A549 (cell line): ENCODE measurements at regions of chr3 and their contacts with region 1.

Region 1: DNA sequence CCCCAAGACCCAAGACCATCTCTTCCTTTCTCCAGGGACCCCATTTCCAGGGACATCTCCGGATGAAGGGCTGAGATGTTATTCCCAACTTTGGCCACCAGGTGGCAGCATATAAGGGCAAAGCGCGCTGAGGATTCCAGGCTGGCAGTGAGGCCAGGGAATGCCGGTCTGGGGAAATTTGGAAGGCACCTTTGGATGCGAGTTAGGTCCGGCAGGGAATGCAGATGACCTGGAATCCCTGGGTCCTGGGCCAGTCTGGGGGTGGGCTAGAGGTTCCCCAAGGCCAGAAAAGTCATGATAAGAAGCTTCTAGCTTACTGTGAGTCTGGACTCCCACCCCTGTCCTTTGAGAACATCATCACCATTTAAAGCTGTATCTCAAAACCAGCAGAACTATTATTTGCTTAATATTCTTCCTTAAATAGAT is 1.6 kb upstream of the CHST13 start:
- DNase-seq: peak; percentile 41 to 64
- ATAC-seq: peak; percentile 32 to 65; a peak in 4 of 6 replicates
- H3K4me3 ChIP-seq: no peak overlapping the region
- H3K27ac ChIP-seq: no peak overlapping the region
- H3K4me1 ChIP-seq: 0 out of 3 replicates have a peak, but pooled peaks cover 7% of the 10 kb centered on the region
- CTCF ChIP-seq: peak; percentile 70
- EP300 ChIP-seq: no peak
- POLR2A ChIP-seq: no peak
- RAD21 ChIP-seq: peak; percentile 61 to 66

Region 2: DNA sequence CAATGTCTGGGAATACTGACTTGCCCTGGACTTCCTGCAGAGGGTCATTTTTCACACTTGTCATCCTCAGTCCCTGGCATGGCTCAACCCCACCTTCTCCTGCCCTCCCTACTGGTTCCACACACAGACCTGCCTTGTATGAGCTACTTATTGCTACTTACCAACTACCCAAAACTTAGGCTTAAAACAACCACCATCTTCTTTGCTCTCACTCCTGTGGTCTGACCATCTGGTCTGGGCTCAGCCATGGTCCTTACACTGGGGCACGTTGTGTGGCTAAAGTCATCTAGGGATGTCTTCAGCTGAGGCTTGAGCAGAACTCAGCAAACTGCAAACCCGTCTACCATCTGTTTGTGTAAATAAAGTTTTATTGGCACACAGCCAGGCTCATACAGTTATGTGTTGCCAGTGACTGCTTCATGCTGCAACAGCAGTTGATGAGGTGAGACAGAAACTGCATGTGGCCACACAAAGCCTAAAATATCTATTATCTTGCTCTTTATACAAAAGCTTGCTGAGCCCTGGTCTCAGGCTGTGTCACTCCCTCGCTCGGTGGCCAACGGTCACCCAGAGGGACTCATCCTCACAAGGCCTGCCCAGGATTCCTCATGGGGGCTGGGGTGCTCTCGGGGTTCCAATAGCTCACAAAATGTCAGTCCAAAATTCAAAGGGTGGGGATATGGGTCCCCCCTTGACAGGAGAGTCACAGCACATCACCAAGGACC is 208.6 kb before region 1 on chr3:
- CTCF ChIA-PET with region 1: no interaction called
- POLR2A ChIA-PET with region 1: no interaction called
- DNase-seq: no peak
- ATAC-seq: no peak
- H3K4me3 ChIP-seq: no peak overlapping the region
- H3K27ac ChIP-seq: no peak overlapping the region
- H3K4me1 ChIP-seq: no peaks in the 10 kb centered on the region
- CTCF ChIP-seq: no peak
- EP300 ChIP-seq: no peak
- POLR2A ChIP-seq: no peak
- RAD21 ChIP-seq: no peak

Region 3: DNA sequence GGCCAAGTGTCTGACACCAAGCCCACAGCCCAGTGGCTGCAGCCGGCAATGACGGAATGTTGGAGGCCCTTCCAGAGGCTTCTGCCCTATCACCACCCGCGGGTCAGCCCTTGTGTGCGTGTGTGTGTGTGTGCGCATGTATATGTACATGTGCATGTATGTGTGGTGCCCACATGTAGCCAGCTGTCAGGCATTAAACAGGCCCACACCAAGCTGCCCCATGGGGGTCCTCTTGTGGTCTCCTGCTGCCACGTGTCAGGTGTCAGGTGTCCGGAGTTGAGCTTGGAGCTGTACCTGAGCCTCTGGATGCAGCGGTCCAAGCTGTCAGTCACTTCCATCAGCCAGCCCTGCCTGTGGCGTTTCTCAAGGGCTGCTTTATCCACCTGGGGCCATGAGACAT is 18.7 kb before region 1 on chr3:
- CTCF ChIA-PET with region 1: interaction called, 21 read pairs
- POLR2A ChIA-PET with region 1: no interaction called
- DNase-seq: no peak
- ATAC-seq: no peak
- H3K4me3 ChIP-seq: no peak overlapping the region
- H3K27ac ChIP-seq: no peak overlapping the region
- H3K4me1 ChIP-seq: no peaks in the 10 kb centered on the region
- CTCF ChIP-seq: no peak
- EP300 ChIP-seq: no peak
- POLR2A ChIP-seq: no peak
- RAD21 ChIP-seq: no peak

Region 4: DNA sequence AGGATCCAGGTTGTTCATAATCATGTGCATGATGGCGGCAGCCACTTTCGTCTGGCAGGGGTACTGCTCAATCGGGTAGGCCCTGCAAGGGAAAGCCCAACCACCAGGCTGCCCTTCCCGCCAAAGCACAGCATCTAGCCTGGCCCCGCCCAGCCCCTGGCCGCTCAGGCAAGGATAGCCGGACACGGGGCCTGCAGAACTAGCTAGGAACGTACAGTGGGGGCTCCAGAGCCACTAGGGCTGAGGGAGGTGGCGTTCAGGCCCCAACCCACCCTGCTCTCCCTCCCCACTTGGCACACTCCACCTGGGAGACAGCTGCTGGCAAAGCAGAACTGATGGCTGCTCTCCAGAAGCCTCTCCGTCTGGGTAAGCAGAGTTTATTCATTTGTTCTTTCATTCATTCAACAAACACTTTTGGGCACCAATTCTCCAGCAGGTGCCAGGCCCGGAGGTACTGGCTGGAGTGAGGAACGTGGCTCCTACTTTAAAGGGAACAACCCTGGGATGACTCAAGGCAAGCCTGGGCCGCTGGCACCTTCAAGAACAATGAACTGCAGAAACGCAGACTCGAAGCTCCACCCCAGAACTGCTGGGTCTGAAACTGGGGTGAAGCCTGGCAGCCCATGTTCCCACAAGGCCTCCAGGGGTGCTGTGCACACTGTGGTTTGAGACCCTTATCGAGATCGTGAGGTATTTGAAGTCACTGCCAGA is 12.6 kb before region 1 on chr3:
- CTCF ChIA-PET with region 1: interaction called, 21 read pairs
- POLR2A ChIA-PET with region 1: no interaction called
- DNase-seq: no peak
- ATAC-seq: no peak
- H3K4me3 ChIP-seq: no peak overlapping the region
- H3K27ac ChIP-seq: no peak overlapping the region
- H3K4me1 ChIP-seq: no peaks in the 10 kb centered on the region
- CTCF ChIP-seq: no peak
- EP300 ChIP-seq: no peak
- POLR2A ChIP-seq: no peak
- RAD21 ChIP-seq: no peak